ENCODE measurements at regions of chr7 and their contacts with region 1.

Region 1: DNA sequence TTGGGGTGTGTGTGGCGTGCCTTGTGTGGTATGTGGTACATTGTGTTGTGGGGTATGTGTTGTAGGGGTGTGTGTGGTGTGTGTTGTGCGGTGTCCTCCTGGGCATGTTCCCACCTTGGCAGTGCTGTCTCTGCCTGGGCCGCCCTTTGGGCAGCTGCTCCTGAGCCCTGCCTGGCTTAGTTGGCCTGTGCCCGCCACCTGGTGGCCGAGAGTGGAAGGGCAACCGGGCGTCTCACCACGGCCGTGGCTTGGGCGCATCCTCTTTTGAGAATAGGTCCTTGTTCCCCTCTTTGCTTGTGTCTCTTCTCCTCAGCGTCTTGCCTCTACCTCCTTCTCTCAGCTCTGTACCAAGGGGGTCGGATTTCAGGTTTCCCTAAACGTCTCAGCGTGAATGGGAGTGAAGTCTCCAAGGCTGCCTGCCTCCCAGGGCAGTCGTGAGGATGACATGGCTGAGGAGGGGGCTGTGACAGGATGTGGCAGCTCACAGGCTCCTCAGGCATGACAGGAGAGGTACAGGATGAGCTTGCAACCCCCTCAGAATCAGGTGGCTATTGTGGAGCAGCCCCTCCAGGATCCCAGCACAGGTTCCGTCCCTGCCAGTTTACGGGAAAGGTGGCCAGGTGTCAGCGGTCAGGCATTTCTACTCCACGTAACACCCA is 98.4 kb upstream of the PODXL start:
- DNase-seq: peak; percentile 83 to 97
- H3K4me3 ChIP-seq: no peak overlapping the region
- CTCF ChIP-seq: peak in 2 of 3 donors; percentile 47 to 76
- POLR2A ChIP-seq: no peak

Region 2: DNA sequence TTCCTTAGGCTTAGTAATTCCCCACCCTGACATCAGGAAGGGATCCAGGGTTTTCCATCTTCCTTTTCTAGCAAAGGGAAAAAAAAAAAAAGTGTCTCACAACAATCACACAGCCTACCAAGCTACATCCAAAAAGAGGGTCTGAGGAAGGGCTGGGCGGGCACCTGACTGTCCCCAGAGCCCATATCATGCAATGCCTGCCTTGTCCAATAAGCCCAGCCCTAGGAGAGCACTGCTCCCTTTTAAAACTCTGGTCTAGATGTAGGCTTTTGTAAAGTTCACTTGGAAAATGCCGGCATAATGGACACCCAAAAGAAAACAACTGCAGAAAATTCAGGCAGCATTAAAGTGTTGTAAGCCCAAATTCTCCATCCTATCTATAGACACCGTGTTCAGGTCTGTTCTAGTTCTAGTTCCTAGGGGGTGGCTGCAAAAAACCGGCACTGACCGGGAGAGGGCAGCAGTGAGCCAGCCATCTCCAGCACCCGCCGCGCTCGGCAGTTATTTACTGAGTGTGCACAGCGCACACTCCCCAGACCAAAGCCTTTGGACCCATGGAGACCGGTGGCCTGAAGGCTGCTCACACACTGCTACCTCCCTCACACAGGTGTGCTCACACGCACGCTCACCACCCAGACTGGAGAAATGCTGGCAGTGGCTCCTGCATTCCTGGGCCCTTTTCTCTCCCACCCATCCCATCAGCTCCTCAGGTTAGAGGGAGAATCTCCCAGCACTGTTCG is 147.0 kb before region 1 on chr7:
- intact Hi-C with region 1: loop called (anchors 5 kb)
- DNase-seq: peak; percentile 77 to 97
- H3K4me3 ChIP-seq: no peak overlapping the region
- CTCF ChIP-seq: peak in 1 of 3 donors; percentile 55
- POLR2A ChIP-seq: no peak

Measured in lower leg skin (tissue), 4 donors.